Dendritic cell treated with granulocyte-macrophage colony-stimulating factor and Interleukin-4, amounts not matched to agents 40 ng/mL and 50 ng/mL, for 4 days (primary cell): ENCODE measurements at regions of chr15 and their contacts with region 1.

Region 1: GRCh38 chr15:68304589-68305337 is 27.2 kb downstream of the FEM1B start:
- H3K4me3 Mint-ChIP-seq: no peak overlapping the region
- H3K27ac Mint-ChIP-seq: no peak overlapping the region
- H3K4me1 Mint-ChIP-seq: peaks cover 51% of the 10 kb centered on the region
- H3K27me3 Mint-ChIP-seq: no peaks in the 10 kb centered on the region

Region 2: DNA sequence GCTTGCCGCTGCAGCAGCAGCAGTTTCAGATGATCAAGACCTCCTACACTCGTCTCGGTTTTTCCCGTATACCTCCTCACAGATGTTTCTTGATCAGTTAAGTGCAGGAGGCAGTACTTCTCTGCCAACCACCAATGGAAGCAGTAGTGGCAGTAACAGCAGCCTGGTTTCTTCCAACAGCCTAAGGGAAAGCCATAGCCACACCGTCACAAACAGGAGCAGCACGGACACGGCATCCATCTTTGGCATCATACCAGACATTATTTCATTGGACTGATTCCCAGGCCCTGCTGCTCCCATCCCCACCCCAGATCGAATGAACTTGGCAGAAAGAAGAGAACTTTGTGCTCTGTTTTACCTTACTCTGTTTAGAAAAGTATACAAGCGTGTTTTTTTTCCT is 117.2 kb before region 1 on chr15:
- intact Hi-C with region 1: no loop called
- H3K4me3 Mint-ChIP-seq: no peak overlapping the region
- H3K27ac Mint-ChIP-seq: no peak overlapping the region
- H3K4me1 Mint-ChIP-seq: no peaks in the 10 kb centered on the region
- H3K27me3 Mint-ChIP-seq: no peaks in the 10 kb centered on the region

Region 3: GRCh38 chr15:68252925-68253534 is 51.7 kb before region 1 on chr15:
- intact Hi-C with region 1: loop called (anchors 1 kb)
- H3K4me3 Mint-ChIP-seq: no peak overlapping the region
- H3K27ac Mint-ChIP-seq: no peak overlapping the region
- H3K4me1 Mint-ChIP-seq: peaks cover 37% of the 10 kb centered on the region
- H3K27me3 Mint-ChIP-seq: no peaks in the 10 kb centered on the region

Region 4: DNA sequence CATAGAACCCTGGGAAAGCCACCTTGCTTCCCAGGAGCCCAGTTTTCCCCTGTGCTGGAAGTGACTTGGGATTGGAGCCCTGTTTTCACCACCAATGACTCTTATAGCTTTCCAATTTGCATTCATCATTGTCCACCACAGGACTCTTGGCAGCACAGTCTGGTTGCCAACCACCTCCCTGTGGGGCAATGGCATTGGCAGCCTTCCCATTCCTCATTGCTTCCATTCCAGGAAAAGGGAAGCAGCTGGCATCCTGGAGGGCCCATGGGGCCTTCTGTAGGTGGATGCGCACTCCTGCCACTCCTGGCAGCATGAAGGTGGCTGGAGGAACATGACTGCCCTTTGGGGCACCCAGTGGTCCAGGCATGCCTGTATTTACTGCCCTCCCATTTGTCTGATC is 30.5 kb after region 1 on chr15:
- intact Hi-C with region 1: no loop called
- H3K4me3 Mint-ChIP-seq: no peak overlapping the region
- H3K27ac Mint-ChIP-seq: peak overlapping the region; percentile 98
- H3K4me1 Mint-ChIP-seq: peaks cover 87% of the 10 kb centered on the region
- H3K27me3 Mint-ChIP-seq: peaks cover 9% of the 10 kb centered on the region

Region 5: DNA sequence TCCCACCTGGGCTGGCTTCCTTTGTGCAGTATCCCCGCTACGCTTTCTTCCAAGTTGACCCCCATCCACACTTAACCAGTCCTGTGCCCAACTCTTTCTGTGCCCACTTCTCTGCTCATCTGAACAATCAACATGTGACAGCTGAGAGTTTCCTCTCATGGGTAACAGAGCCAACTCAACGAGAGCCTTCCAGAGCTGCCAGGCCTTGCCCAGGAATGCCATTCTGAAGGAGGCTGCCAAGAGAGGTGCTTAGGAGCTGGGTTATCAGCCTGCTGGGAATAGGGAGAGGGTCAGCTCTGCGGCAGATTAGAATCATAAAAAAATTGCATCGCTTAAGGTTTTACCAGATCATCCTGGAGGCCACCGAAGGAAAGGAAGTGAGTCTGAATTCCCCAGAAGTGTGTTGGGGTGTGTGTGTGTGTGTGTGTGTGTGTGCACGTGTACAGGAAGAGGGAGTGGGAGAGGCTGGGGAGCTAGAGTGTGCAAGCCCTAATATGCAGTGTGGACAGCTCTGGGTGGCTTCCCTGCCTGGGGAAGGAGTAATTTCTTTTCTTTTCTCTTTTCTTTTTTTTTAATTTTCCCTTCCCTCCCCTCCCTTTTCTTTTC is 60.5 kb after region 1 on chr15:
- intact Hi-C with region 1: loop called (anchors 1 kb)
- H3K4me3 Mint-ChIP-seq: peak overlapping the region; percentile 75
- H3K27ac Mint-ChIP-seq: no peak overlapping the region
- H3K4me1 Mint-ChIP-seq: peaks cover 49% of the 10 kb centered on the region
- H3K27me3 Mint-ChIP-seq: peaks cover 8% of the 10 kb centered on the region

Region 6: DNA sequence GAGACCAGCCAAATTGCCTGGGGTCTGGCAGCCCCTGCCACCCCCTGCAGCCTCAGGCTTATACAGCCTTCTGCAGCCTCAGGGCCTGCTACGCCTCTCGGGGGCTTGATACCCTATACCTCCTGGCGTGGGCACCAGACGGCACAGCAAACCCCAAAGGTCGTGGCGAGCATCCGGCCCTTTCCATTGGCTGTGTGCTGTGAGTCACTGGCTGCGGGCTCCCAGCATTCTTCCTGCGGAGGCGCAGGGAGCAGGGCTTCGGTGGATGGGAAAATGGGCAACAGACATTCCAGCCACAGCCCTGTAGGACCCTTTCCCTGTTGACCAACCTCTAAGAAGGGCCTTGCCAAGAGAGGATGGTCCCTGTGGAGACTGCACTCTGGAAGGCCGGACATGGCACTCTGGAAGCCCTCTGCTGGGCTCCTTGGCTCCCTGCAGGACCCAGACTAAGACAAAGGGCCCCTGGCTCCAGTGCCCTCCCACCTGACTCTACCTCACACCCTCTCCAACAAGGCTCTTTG is 67.6 kb after region 1 on chr15:
- intact Hi-C with region 1: loop called (anchors 1 kb)
- H3K4me3 Mint-ChIP-seq: no peak overlapping the region
- H3K27ac Mint-ChIP-seq: no peak overlapping the region
- H3K4me1 Mint-ChIP-seq: peaks cover 32% of the 10 kb centered on the region
- H3K27me3 Mint-ChIP-seq: peaks cover 4% of the 10 kb centered on the region

Region 7: DNA sequence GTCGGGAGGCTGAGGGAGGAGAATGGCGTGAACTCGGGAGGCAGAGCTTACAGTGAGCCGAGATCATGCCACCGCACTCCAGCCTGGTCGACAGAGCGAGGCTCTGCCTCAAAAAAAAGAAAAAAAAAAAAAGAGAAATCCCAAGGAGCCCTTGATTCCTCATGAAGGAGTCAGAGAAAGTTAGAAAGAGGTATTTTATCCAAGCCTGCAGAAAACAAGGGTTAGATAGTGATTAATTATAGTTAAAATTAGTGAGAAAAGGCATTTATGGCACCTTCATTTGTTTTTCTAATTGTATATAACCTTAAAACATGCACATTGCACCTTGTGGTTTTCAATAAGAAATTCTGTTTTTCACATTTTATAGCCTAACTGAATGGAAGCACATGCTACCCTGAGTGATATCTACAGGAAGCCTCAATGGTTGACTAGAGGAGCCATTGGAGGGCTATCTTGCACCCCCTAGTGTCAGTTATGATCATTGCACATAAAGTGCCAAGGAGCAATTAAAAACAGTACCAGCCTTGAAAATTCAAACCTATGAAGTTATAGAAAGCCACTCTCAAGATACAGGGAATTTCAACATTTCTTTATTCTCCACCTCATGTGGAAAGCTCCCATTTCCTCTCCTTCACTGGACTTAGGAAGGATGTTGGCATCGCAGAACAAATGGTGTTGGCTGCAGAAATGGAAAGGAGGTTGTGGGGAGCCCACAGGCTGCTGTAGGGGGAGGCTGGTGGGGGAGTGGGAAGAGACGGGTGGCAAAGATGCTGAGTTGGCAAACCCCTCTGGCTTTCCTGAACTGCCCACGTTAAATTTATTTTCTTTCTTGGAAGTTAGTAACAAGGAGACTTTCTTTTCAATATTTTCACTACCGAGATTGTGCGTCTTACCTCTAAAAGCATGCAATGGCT is 78.7 kb after region 1 on chr15:
- intact Hi-C with region 1: loop called (anchors 1 kb)
- H3K4me3 Mint-ChIP-seq: no peak overlapping the region
- H3K27ac Mint-ChIP-seq: no peak overlapping the region
- H3K4me1 Mint-ChIP-seq: peaks cover 14% of the 10 kb centered on the region
- H3K27me3 Mint-ChIP-seq: peaks cover 3% of the 10 kb centered on the region

Region 8: GRCh38 chr15:68536331-68537095 is 231.8 kb after region 1 on chr15:
- intact Hi-C with region 1: no loop called
- H3K4me3 Mint-ChIP-seq: no peak overlapping the region
- H3K27ac Mint-ChIP-seq: no peak overlapping the region
- H3K4me1 Mint-ChIP-seq: no peaks in the 10 kb centered on the region
- H3K27me3 Mint-ChIP-seq: no peaks in the 10 kb centered on the region

Region 9: DNA sequence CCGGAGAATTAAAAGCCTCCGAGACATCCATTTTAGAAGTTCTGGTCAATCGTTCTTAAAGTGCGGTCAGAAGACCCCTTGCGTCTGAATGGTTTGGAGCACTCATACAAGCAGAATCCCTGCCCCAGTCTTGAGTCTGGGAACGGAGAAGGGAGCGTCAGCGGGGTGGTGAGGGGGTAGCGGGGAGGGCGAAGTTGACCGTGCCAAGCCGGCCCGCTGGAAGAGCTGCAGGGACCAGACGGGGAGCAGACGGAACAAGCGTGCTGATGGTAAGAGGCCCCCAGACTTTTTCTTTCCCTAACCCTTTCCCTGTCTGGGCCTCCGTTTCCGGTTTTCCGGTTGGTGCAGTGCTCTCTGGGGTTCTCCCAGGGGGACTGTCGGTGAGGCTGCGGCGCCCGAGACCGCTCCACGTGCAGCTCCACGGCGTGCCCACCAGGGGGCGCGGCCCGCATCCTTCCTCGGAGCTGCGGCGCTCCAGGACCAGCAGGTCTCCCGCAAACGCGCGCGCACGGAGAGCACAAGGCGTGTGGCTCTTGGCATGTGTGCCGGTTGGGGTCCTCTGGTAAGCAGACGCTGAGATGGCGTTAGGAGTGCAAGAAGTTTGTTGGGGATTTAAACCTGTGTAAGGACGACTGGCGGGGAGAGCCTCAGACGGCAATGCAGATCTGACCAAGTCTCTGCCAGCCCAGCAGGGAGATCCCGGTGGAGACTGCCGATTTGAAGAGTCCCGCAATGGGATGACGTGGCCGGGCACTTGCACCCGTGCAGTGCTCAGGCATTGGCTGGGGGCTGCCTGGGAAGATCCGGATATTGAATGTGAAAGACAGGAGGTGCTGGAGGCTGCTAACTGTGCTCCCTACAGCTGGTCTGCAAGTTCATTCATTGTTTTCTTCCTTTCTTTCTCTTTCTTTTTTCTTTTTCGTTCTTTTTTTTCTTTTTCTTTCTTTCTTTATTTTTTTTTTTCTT is 254.9 kb after region 1 on chr15:
- intact Hi-C with region 1: loop called (anchors 10 kb)
- H3K4me3 Mint-ChIP-seq: peak overlapping the region; percentile 76
- H3K27ac Mint-ChIP-seq: peak overlapping the region; percentile 13
- H3K4me1 Mint-ChIP-seq: peaks cover 17% of the 10 kb centered on the region
- H3K27me3 Mint-ChIP-seq: peaks cover 57% of the 10 kb centered on the region

Region 10: DNA sequence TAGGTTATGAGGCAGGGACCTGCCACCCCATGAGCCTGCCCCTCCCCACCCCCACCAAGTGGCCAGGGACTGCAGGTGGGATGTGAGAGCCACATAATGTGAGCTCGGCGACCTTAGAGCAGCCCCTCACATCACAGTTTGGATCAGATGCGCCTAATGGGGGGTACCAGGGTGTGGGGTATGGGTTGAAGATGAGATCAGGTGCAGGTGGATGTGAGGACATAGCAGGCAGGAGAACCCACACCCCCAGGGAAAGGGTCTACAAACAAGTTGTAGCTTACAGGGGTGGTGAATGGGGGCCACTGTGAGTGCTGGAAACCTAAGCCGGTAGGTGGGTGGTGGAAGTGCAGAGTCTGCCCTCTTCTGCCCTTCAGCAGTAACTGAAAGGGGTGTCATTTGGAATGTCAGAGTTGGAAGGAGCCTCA is 368.0 kb after region 1 on chr15:
- intact Hi-C with region 1: loop called (anchors 5 kb)
- H3K4me3 Mint-ChIP-seq: no peak overlapping the region
- H3K27ac Mint-ChIP-seq: no peak overlapping the region
- H3K4me1 Mint-ChIP-seq: peaks cover 22% of the 10 kb centered on the region
- H3K27me3 Mint-ChIP-seq: peaks cover 9% of the 10 kb centered on the region